WTC11 (cell line): ENCODE measurements at regions of chr22 and their contacts with region 1.

Region 1: GRCh38 chr22:22342697-22343580 is 98.4 kb downstream of the VPREB1 start:
- DNase-seq: peak; percentile 98
- ATAC-seq: peak; percentile 99
- H3K4me3 Mint-ChIP-seq: no peak overlapping the region
- H3K27ac Mint-ChIP-seq: no peak overlapping the region
- H3K4me1 Mint-ChIP-seq: peaks cover 4% of the 10 kb centered on the region
- H3K27me3 Mint-ChIP-seq: peaks cover 100% of the 10 kb centered on the region
- CTCF ChIP-seq: peak; percentile 87

Region 2: GRCh38 chr22:22168190-22168940 is 174.6 kb before region 1 on chr22:
- CTCF ChIA-PET with region 1: no interaction called
- POLR2A ChIA-PET with region 1: no interaction called
- DNase-seq: no peak
- ATAC-seq: peak; percentile 65
- H3K4me3 Mint-ChIP-seq: no peak overlapping the region; the same call in 1 of the 2 replicates
- H3K27ac Mint-ChIP-seq: no peak overlapping the region
- H3K4me1 Mint-ChIP-seq: 0 out of 2 replicates have a peak, but pooled peaks cover 3% of the 10 kb centered on the region
- H3K27me3 Mint-ChIP-seq: peaks cover 98% of the 10 kb centered on the region
- CTCF ChIP-seq: no peak

Region 3: DNA sequence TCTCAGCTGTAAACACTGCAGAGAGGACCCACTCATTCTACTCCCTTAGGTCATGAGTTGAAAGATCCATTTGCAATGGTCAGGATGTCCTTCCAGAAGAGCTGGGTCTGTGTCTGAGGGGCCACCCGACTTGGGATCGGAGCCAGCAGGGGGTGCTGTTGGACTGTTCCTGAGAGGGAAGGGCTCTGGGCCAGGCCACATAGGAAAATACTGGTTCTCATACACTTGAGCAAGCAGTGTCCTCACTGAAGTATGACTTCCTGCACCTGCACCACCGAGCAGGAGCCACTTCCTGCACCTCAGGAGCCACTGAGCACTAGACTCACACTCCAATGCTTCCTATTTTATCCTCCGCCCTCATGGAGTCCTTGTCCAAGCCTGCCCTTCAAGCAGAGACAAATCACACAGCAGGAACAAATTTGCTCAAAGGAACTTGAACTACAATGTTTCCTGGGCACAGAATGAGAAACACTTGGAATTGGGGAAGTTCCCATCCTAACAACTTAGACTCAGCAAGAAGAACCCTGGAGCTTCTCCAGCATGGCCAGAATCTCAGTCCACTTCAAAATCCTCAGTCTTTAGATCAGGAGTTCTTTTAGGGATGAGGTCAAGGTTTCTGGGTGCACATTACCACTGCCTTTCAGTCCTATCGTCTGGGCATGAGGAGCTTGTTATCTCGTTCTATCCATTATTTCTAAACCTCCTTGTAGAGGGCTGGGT is 134.9 kb before region 1 on chr22:
- CTCF ChIA-PET with region 1: interaction called, 14 read pairs
- POLR2A ChIA-PET with region 1: no interaction called
- DNase-seq: peak; percentile 86
- ATAC-seq: peak; percentile 90
- H3K4me3 Mint-ChIP-seq: no peak overlapping the region
- H3K27ac Mint-ChIP-seq: no peak overlapping the region
- H3K4me1 Mint-ChIP-seq: no peaks in the 10 kb centered on the region
- H3K27me3 Mint-ChIP-seq: peaks cover 96% of the 10 kb centered on the region
- CTCF ChIP-seq: peak; percentile 43

Region 4: DNA sequence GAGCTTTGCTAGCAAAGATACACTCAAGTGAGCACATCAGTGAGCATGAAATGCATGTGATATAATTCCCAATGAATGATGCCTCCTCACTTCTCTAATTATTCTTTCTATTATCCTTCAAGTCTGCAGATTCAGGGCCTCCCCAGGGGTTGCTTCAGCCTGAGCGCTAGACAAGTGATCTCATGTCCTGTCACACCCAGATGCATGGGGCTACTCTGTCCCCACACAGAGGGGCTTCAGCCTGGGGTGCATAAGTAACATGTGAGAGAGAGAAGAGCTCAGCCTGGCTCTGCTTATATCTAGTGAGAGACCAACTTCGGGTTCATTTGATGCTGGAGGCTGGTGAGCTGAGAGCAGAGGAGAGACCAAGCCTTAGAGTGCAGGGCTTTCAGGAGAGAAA is 13.1 kb before region 1 on chr22:
- CTCF ChIA-PET with region 1: interaction called, 45 read pairs
- POLR2A ChIA-PET with region 1: no interaction called
- DNase-seq: no peak
- ATAC-seq: no peak
- H3K4me3 Mint-ChIP-seq: no peak overlapping the region
- H3K27ac Mint-ChIP-seq: no peak overlapping the region
- H3K4me1 Mint-ChIP-seq: no peaks in the 10 kb centered on the region
- H3K27me3 Mint-ChIP-seq: peaks cover 100% of the 10 kb centered on the region
- CTCF ChIP-seq: no peak

Region 5: GRCh38 chr22:22369964-22370270 is 27.0 kb after region 1 on chr22:
- CTCF ChIA-PET with region 1: interaction called, 14 read pairs
- POLR2A ChIA-PET with region 1: no interaction called
- DNase-seq: no peak
- ATAC-seq: no peak
- H3K4me3 Mint-ChIP-seq: no peak overlapping the region
- H3K27ac Mint-ChIP-seq: no peak overlapping the region
- H3K4me1 Mint-ChIP-seq: no peaks in the 10 kb centered on the region
- H3K27me3 Mint-ChIP-seq: peaks cover 100% of the 10 kb centered on the region
- CTCF ChIP-seq: no peak

Region 6: GRCh38 chr22:22422629-22423112 is 79.7 kb after region 1 on chr22:
- CTCF ChIA-PET with region 1: interaction called, 14 read pairs
- POLR2A ChIA-PET with region 1: no interaction called
- DNase-seq: peak; percentile 82
- ATAC-seq: peak; percentile 75
- H3K4me3 Mint-ChIP-seq: no peak overlapping the region
- H3K27ac Mint-ChIP-seq: no peak overlapping the region
- H3K4me1 Mint-ChIP-seq: peaks cover 16% of the 10 kb centered on the region
- H3K27me3 Mint-ChIP-seq: peaks cover 98% of the 10 kb centered on the region
- CTCF ChIP-seq: peak; percentile 52

Region 7: GRCh38 chr22:22538226-22538989 is 195.5 kb after region 1 on chr22:
- CTCF ChIA-PET with region 1: no interaction called
- POLR2A ChIA-PET with region 1: no interaction called
- DNase-seq: no peak
- ATAC-seq: no peak
- H3K4me3 Mint-ChIP-seq: no peak overlapping the region
- H3K27ac Mint-ChIP-seq: no peak overlapping the region
- H3K4me1 Mint-ChIP-seq: no peaks in the 10 kb centered on the region
- H3K27me3 Mint-ChIP-seq: peaks cover 91% of the 10 kb centered on the region
- CTCF ChIP-seq: no peak